Aorta (tissue), 5 donors: ENCODE measurements at regions of chr2 and their contacts with region 1.

Region 1: GRCh38 chr2:231900486-231900942 is 25.7 kb downstream of the NPPC start:
- DNase-seq: peak; percentile 83 to 90
- ATAC-seq: peak; percentile 60
- H3K4me3 ChIP-seq: no peak overlapping the region
- H3K27ac ChIP-seq: no peak overlapping the region
- H3K4me1 ChIP-seq: no peaks in the 10 kb centered on the region
- H3K27me3 ChIP-seq: no peaks in the 10 kb centered on the region

Region 2: DNA sequence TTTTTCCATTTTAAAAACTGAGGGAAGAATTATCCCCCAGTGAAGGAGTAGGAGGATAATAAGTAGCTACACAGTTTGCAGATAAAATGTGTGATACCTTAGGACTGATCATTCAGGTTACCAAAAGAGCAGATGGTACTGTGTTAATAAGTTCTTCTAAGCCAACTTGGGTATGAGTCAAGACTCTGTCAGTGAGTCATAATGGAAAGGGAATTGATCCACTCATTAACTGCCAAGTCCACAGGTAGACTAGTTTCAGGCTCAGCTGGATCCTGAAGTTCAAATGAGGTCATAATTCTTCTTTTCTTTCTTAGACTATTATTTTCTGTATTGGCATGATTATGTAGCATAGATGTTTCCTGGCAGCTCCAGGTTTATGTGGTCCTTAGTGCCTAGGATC is 335.7 kb after region 1 on chr2:
- intact Hi-C with region 1: no loop called
- DNase-seq: no peak
- ATAC-seq: no peak
- H3K4me3 ChIP-seq: no peak overlapping the region
- H3K27ac ChIP-seq: no peak overlapping the region
- H3K4me1 ChIP-seq: no peaks in the 10 kb centered on the region
- H3K27me3 ChIP-seq: no peaks in the 10 kb centered on the region

Region 3: GRCh38 chr2:232327105-232328041 is 426.9 kb after region 1 on chr2:
- intact Hi-C with region 1: loop called in 1 of 2 experiments (anchors 5 kb)
- DNase-seq: peak; percentile 72 to 90
- ATAC-seq: peak; percentile 75
- H3K4me3 ChIP-seq: no peak overlapping the region
- H3K27ac ChIP-seq: no peak overlapping the region
- H3K4me1 ChIP-seq: no peaks in the 10 kb centered on the region
- H3K27me3 ChIP-seq: no peaks in the 10 kb centered on the region

Region 4: GRCh38 chr2:232521959-232522622 is 621.6 kb after region 1 on chr2:
- intact Hi-C with region 1: loop called in 1 of 2 experiments (anchors 10 kb)
- DNase-seq: peak; percentile 61 to 91
- ATAC-seq: no peak
- H3K4me3 ChIP-seq: no peak overlapping the region
- H3K27ac ChIP-seq: no peak overlapping the region
- H3K4me1 ChIP-seq: no peaks in the 10 kb centered on the region
- H3K27me3 ChIP-seq: no peaks in the 10 kb centered on the region